ENCODE measurements at regions of chr15 and their contacts with region 1.

Region 1: DNA sequence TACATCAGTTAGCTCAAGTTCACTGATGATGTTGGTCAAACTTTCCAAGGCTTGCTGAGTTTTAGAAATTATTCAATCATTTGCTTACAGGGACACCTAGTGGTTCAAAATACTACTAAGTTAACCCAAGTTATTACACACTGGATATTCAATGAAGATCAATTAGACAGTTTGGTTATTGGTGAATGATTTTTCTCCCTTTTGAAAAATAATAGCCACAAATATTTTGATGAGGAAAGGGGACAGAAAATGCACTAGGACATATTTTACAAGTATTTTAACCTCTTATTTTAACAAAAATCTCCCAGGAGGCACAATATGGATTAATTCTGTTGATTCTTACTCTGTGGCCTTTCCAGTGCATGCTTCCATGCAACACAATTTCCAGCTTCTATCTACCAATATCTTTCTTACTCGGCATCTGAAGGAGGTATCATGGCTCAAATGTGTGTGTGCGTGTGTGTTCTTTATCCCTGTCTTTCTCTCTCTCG is 20.1 kb upstream of the GOLGA6L2 start:
- DNase-seq: peak; percentile 41
- H3K4me3 ChIP-seq: no peak overlapping the region
- H3K27ac ChIP-seq: no peak overlapping the region
- H3K4me1 ChIP-seq: no peaks in the 10 kb centered on the region
- H3K27me3 ChIP-seq: no peaks in the 10 kb centered on the region
- CTCF ChIP-seq: peak; percentile 46

Region 2: GRCh38 chr15:23081271-23081670 is 385.9 kb before region 1 on chr15:
- CTCF ChIA-PET with region 1: no interaction called
- POLR2A ChIA-PET with region 1: no interaction called
- intact Hi-C with region 1: loop called (anchors 10 kb)
- DNase-seq: no peak
- H3K4me3 ChIP-seq: no peak overlapping the region
- H3K27ac ChIP-seq: no peak overlapping the region
- H3K4me1 ChIP-seq: no peaks in the 10 kb centered on the region
- H3K27me3 ChIP-seq: no peaks in the 10 kb centered on the region
- CTCF ChIP-seq: no peak

Region 3: DNA sequence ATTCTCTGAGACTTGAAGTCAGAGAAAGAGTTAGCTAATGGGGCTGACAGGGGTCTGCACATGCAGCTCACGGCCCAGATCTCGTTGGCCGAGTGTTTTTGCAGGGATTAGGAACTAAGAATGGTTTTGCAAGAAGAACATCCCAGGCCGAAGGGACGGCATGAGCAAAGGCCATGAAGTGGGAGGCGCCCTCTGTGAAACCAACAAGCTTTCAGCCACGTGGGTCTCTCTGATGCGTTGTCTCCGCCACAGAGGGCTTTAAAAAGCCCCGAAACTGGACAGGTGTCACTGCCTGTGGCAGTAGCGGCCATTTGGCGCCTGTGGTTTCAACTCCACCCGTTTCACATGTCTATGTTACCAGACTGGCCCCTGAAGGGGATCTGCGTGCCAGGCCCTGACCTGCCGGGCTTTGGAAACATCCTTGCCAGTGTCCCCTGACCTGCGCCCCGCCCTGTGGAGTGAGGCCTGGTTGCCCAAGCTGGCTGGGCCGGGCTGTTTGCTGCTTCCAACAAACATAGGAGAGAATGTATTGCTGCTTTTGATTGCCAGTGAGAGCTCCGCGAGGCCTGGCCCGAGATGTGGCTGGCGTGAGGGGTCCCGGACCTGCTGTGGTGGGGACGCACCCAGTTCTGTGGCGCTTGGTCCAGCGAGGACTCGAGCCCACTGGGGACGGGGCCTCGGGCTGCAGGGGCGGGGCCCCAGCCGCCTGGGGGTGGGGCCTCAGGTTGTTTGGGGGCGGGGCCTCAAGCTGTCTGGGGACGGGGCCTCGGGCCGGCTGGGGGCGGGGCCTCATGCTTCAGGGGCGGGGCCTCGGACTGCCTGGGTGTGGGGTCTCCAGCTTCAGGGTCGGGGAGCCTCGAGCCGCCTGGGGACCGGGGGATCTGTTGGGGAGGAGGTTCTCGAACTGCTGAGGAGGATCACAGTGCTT is 50.5 kb before region 1 on chr15:
- CTCF ChIA-PET with region 1: no interaction called
- POLR2A ChIA-PET with region 1: no interaction called
- intact Hi-C with region 1: loop called (anchors 5 kb)
- DNase-seq: no peak
- H3K4me3 ChIP-seq: no peak overlapping the region
- H3K27ac ChIP-seq: no peak overlapping the region
- H3K4me1 ChIP-seq: no peaks in the 10 kb centered on the region
- H3K27me3 ChIP-seq: no peaks in the 10 kb centered on the region
- CTCF ChIP-seq: no peak

Region 4: GRCh38 chr15:24054547-24055245 is 587.5 kb after region 1 on chr15:
- CTCF ChIA-PET with region 1: no interaction called
- POLR2A ChIA-PET with region 1: no interaction called
- intact Hi-C with region 1: no loop called
- DNase-seq: no peak
- H3K4me3 ChIP-seq: no peak overlapping the region
- H3K27ac ChIP-seq: no peak overlapping the region
- H3K4me1 ChIP-seq: no peaks in the 10 kb centered on the region
- H3K27me3 ChIP-seq: no peaks in the 10 kb centered on the region
- CTCF ChIP-seq: no peak